ENCODE measurements at regions of chr1 and their contacts with region 1.

Region 1: DNA sequence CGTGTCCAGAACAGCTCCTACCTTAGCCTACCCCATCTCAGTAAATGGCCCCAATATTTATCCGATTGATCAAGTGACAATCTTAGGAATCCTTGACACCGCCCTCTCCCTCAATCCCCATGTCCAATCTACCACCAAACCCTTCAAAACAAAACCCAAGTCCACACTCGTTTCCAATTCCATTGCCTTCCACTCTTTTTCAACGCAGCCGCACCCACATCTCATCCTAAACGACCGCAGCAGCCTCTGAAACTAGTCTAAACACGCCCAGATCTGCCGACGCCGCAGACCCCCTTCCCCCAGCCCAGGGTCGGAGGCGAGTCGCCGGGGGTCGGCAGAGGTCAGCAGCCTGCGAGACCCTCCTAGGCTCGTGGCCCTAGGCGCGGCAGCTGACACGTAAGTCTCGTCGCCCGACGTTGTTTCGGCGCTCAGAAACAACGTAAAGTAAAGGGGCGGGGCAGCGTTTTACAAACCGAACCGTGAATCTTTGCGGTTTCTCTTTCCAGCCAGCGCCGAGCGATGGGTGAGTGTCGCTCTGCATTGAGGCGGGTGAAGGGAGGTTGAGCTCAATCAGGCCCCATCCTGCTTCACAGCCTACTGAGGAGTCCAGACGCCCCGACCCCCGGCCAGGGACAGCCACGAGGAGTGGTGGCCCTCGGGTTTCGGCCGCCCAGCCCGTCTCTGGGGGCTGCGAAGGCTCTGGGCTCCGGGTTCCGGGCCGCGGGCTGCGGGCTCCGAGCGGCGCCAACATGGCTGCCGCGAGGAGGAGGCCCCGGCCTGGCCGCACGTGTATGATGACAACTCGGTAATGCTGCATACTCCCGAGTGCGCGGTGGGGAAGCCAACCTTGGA is at the start of gene RPS8:
- DNase-seq: peak; percentile 95
- ATAC-seq: peak; percentile 80
- H3K4me3 Mint-ChIP-seq: peak within 1 kb of the TSS; percentile 86
- H3K27ac Mint-ChIP-seq: peak within 1 kb of the TSS; percentile 97
- H3K4me1 Mint-ChIP-seq: peaks cover 33% of the 10 kb centered on the region
- H3K27me3 Mint-ChIP-seq: no peaks in the 10 kb centered on the region
- total RNA-seq, gene RPS8: 1,750 to 1,777 TPM

Region 2: GRCh38 chr1:44739361-44740178 is 35.7 kb before region 1 on chr1 and contains the start of gene KIF2C:
- CTCF ChIA-PET with region 1: interaction called, 5 read pairs
- POLR2A ChIA-PET with region 1: interaction called, 18 read pairs
- DNase-seq: peak; percentile 98
- ATAC-seq: peak; percentile 99
- H3K4me3 Mint-ChIP-seq: peak within 1 kb of the TSS; percentile 99
- H3K27ac Mint-ChIP-seq: peak within 1 kb of the TSS; percentile 97
- H3K4me1 Mint-ChIP-seq: peaks cover 39% of the 10 kb centered on the region
- H3K27me3 Mint-ChIP-seq: no peaks in the 10 kb centered on the region
- total RNA-seq, gene KIF2C: 125 to 126 TPM

Region 3: DNA sequence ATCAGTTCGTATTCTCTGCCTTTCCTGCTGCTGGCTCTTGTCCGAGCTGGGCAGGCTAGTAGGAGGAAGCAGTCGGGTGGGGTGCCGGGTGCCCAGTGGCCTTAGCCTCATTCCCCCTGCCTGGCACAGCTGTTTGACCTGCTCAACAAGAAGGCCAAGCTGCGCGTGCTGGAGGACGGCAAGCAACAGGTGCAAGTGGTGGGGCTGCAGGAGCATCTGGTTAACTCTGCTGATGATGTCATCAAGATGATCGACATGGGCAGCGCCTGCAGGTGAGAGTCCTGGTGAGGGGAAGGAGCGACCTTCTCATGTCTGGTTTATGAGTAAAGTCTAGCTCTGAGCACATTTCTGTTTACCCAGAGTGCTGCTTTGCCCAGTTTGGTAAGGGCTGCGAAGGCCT is 16.2 kb before region 1 on chr1:
- CTCF ChIA-PET with region 1: interaction called, 3 read pairs
- POLR2A ChIA-PET with region 1: interaction called, 29 read pairs
- DNase-seq: no peak
- ATAC-seq: no peak
- H3K4me3 Mint-ChIP-seq: no peak overlapping the region
- H3K27ac Mint-ChIP-seq: no peak overlapping the region
- H3K4me1 Mint-ChIP-seq: peaks cover 20% of the 10 kb centered on the region
- H3K27me3 Mint-ChIP-seq: no peaks in the 10 kb centered on the region

Region 4: GRCh38 chr1:44792783-44793714 is 17.7 kb after region 1 on chr1:
- CTCF ChIA-PET with region 1: interaction called, 5 read pairs
- POLR2A ChIA-PET with region 1: interaction called, 23 read pairs
- DNase-seq: no peak
- ATAC-seq: no peak
- H3K4me3 Mint-ChIP-seq: no peak overlapping the region
- H3K27ac Mint-ChIP-seq: no peak overlapping the region
- H3K4me1 Mint-ChIP-seq: peaks cover 3% of the 10 kb centered on the region
- H3K27me3 Mint-ChIP-seq: no peaks in the 10 kb centered on the region

Region 5: GRCh38 chr1:44807262-44808062 is 32.2 kb after region 1 on chr1 and contains the start of gene DYNLT4:
- CTCF ChIA-PET with region 1: interaction called, 3 read pairs
- POLR2A ChIA-PET with region 1: interaction called, 44 read pairs
- DNase-seq: peak; percentile 94
- ATAC-seq: peak; percentile 52
- H3K4me3 Mint-ChIP-seq: peak within 1 kb of the TSS; percentile 65
- H3K27ac Mint-ChIP-seq: peak within 1 kb of the TSS; percentile 100
- H3K4me1 Mint-ChIP-seq: peaks cover 86% of the 10 kb centered on the region
- H3K27me3 Mint-ChIP-seq: no peaks in the 10 kb centered on the region
- total RNA-seq, gene DYNLT4: 1.8 to 2.3 TPM

Region 6: DNA sequence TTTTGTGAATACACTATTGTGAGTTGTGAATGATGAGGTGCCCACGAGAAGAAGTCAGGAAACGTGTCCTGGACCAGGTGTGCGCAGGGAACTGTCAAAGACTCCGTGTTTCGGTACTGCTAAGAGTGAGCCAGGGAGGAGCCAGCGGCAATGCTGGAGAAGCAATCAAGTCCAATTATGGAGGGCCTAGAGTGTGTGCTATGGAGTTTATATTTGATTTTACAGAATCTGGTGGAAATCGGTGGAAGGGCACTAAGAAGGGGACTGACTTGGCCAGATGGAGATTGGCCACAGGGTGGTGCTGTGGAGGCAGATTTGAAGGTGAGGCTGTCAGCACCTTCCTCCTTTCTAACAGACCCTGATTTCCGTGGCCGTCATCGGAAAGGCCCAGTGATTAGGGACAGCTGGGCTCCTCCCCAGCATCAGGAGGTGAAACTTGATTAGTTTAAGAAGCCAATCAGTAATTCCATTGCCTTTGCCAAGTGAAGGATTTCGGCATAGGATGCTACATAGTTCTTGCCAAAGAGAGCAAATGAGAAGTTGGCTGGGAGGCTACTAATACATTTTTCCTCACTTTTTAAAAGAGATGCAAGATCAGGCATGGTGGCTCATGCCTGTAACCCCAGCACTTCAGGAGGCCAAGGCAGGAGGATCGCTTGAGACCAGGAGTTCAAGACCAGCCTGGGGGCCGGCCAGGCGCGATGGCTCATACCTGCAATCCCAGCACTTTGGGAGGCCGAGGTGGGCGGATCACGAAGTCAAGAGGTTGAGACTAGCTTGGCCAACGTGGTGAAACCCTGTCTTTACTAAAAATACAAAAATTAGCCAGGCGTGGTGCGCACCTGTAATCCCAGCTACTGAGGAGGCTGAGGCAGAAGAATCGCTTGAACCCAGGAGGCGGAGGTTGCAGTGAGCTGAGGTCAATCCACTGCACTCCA is 60.7 kb after region 1 on chr1:
- CTCF ChIA-PET with region 1: no interaction called
- POLR2A ChIA-PET with region 1: no interaction called
- DNase-seq: peak; percentile 93
- ATAC-seq: peak; percentile 95
- H3K4me3 Mint-ChIP-seq: no peak overlapping the region
- H3K27ac Mint-ChIP-seq: peak overlapping the region; percentile 7
- H3K4me1 Mint-ChIP-seq: peaks cover 8% of the 10 kb centered on the region
- H3K27me3 Mint-ChIP-seq: peaks cover under 1% of the 10 kb centered on the region

Region 7: GRCh38 chr1:44929531-44929930 is 154.2 kb after region 1 on chr1:
- CTCF ChIA-PET with region 1: no interaction called
- POLR2A ChIA-PET with region 1: no interaction called
- DNase-seq: no peak
- ATAC-seq: no peak
- H3K4me3 Mint-ChIP-seq: no peak overlapping the region
- H3K27ac Mint-ChIP-seq: no peak overlapping the region
- H3K4me1 Mint-ChIP-seq: peaks cover 2% of the 10 kb centered on the region
- H3K27me3 Mint-ChIP-seq: no peaks in the 10 kb centered on the region